ENCODE measurements at regions of chr6 and their contacts with region 1.

Region 1: GRCh38 chr6:136226027-136226673 is 24.0 kb downstream of the MTFR2 start:
- DNase-seq: peak; percentile 54
- H3K4me3 Mint-ChIP-seq: no peak overlapping the region
- H3K27ac Mint-ChIP-seq: peak overlapping the region; percentile 60
- H3K4me1 Mint-ChIP-seq: peaks cover 13% of the 10 kb centered on the region
- H3K27me3 Mint-ChIP-seq: no peaks in the 10 kb centered on the region
- CTCF ChIP-seq: peak; percentile 92

Region 2: GRCh38 chr6:135506270-135506997 is 719.7 kb before region 1 on chr6:
- CTCF ChIA-PET with region 1: no interaction called
- intact Hi-C with region 1: loop called (anchors 10 kb)
- DNase-seq: peak; percentile 8
- H3K4me3 Mint-ChIP-seq: no peak overlapping the region
- H3K27ac Mint-ChIP-seq: no peak overlapping the region
- H3K4me1 Mint-ChIP-seq: peaks cover 16% of the 10 kb centered on the region
- H3K27me3 Mint-ChIP-seq: no peaks in the 10 kb centered on the region
- CTCF ChIP-seq: peak; percentile 21

Region 3: DNA sequence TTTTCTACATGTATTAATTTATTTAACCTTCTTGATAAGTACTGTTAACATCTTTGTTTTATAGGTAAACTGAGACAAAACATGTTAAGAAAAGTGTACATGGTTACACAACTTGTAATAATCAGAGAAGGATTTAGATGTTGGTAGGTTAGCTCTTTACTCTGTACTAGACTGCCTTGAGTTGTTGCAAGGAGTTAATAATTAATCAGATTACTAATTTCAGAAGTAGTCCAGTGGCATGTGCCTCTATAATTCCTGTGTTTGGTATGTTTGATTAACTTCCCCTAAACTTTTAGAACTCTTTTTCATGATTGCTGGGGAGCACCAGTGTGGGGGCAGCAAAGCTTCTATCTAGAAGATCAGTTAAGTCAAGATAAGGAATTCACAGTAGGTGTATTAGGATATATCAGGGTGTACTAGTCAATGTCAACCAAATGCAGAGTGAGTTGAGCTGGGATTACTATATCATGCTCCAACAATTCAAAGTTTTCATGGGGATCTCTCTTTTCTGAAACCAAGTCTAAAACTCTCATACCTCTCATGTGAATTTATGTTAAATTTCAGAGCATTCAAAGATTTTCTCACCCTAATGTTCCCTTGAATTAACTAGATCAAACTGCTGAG is 598.9 kb before region 1 on chr6:
- CTCF ChIA-PET with region 1: interaction called, 10 read pairs
- intact Hi-C with region 1: no loop called
- DNase-seq: peak; percentile 2
- H3K4me3 Mint-ChIP-seq: no peak overlapping the region
- H3K27ac Mint-ChIP-seq: no peak overlapping the region
- H3K4me1 Mint-ChIP-seq: peaks cover 27% of the 10 kb centered on the region
- H3K27me3 Mint-ChIP-seq: no peaks in the 10 kb centered on the region
- CTCF ChIP-seq: no peak

Region 4: DNA sequence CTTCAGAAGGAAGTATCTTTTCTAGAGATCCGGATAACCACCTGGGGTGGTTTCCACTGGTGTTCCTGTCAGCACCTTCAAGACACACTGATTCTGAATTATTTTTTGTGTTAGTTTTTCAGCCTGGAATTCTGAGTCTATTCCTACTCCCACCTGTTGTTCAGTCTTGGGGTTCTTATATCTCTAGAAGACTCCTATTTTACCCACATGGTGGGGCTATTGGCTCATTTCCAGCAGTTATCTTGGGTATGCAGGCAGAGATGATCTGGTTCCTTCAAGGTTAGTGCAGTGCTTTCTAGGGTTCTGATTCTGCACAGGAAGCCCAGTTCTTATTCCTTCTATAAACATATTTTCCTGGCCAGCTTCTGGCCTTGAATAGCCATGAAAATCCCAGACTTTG is 550.3 kb before region 1 on chr6:
- CTCF ChIA-PET with region 1: interaction called, 6 read pairs
- intact Hi-C with region 1: loop called (anchors 1 kb)
- DNase-seq: peak; percentile 45
- H3K4me3 Mint-ChIP-seq: no peak overlapping the region
- H3K27ac Mint-ChIP-seq: peak overlapping the region; percentile 42
- H3K4me1 Mint-ChIP-seq: peaks cover 1% of the 10 kb centered on the region
- H3K27me3 Mint-ChIP-seq: no peaks in the 10 kb centered on the region
- CTCF ChIP-seq: no peak

Region 5: GRCh38 chr6:135909737-135910387 is 316.3 kb before region 1 on chr6:
- CTCF ChIA-PET with region 1: interaction called, 5 read pairs
- intact Hi-C with region 1: loop called (anchors 10 kb)
- DNase-seq: peak; percentile 56
- H3K4me3 Mint-ChIP-seq: no peak overlapping the region
- H3K27ac Mint-ChIP-seq: no peak overlapping the region
- H3K4me1 Mint-ChIP-seq: peaks cover 19% of the 10 kb centered on the region
- H3K27me3 Mint-ChIP-seq: no peaks in the 10 kb centered on the region
- CTCF ChIP-seq: no peak

Region 6: DNA sequence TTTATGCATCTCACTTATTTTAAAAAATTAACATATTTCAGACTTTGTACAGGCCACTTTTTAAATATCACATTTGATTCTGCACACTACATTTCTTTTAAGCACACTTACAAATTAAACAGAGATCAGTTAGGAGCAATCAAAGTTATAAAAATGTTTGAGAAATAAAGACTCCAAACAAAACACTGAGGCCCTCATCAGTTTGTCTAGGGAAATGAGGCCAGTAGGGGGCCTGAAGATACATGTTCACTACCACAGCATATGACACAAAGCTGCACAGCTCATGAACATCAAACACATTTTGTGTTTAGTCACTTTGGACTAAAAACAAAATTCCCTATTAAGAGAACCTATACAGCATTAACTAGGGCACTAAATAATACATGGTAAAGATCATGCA is 194.2 kb before region 1 on chr6:
- CTCF ChIA-PET with region 1: interaction called, 17 read pairs
- intact Hi-C with region 1: loop called (anchors 1 kb)
- DNase-seq: peak; percentile 33
- H3K4me3 Mint-ChIP-seq: no peak overlapping the region
- H3K27ac Mint-ChIP-seq: no peak overlapping the region
- H3K4me1 Mint-ChIP-seq: peaks cover 9% of the 10 kb centered on the region
- H3K27me3 Mint-ChIP-seq: no peaks in the 10 kb centered on the region
- CTCF ChIP-seq: no peak

Region 7: DNA sequence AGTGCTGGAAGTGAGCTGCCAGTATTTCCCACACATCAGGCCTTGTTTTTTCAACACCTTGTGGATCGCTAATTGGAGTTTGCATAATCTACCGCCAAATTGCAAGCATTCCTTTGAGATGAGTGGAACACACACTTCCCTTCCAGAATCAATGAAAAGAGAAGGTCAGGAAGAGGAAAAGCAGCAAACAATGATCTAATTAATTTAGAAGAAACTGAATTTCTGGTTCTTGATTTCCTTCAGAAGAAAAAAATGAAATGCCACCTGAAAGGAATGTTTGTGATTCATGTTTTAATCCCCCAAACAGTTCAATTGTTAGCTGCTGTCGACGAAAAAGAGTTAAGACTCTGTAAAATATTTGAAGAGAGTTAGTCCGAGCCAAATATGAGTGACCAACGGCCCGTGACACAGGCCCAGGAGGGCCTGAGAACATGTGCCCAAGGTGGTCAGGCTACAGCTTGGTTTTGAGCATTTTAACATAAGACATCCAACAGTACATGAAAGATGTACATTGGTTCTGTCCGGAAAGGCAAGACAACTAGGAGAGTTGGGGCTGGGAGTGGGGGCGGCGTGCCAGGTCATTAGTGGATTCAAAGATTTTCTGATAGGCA is 158.3 kb before region 1 on chr6:
- CTCF ChIA-PET with region 1: no interaction called
- intact Hi-C with region 1: loop called (anchors 10 kb)
- DNase-seq: peak; percentile 61
- H3K4me3 Mint-ChIP-seq: peak overlapping the region; percentile 66
- H3K27ac Mint-ChIP-seq: peak overlapping the region; percentile 100
- H3K4me1 Mint-ChIP-seq: peaks cover 37% of the 10 kb centered on the region
- H3K27me3 Mint-ChIP-seq: no peaks in the 10 kb centered on the region
- CTCF ChIP-seq: no peak

Measured in Calu3 (cell line).